ENCODE measurements at regions of chr1 and their contacts with region 1.

Region 1: GRCh38 chr1:9626201-9626608 is 25.3 kb upstream of the PIK3CD start:
- DNase-seq: no peak
- H3K27ac ChIP-seq: no peak overlapping the region
- CTCF ChIP-seq: no peak

Region 2: GRCh38 chr1:9643351-9644256 is 17.4 kb after region 1 on chr1:
- CTCF ChIA-PET with region 1: interaction called, 12 read pairs
- POLR2A ChIA-PET with region 1: no interaction called
- DNase-seq: no peak
- H3K27ac ChIP-seq: peak overlapping the region; percentile 93
- CTCF ChIP-seq: no peak

Measured in RWPE1 (cell line).